ENCODE measurements at regions of chr10 and their contacts with region 1.

Region 1: DNA sequence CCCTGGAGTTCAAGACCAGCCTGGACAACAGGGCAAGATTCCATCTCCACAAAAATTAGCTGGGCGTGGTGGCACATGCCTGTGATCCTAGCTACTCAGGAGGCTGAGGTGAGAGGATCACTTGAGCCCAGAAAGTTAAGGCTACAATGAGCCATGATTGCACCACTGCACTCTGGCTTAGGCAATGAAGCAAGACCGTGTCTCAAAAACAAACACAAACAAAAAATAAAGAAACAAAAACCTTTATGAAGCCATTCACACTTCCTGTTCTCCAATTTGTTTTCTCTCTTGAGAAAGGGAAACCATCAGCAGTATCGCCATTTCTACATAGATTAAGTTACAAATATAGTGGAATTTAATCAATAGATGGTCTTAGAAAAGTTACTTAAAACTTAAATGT is 19.8 kb downstream of the YME1L1 start:
- DNase-seq: no peak
- ATAC-seq: no peak
- H3K4me3 ChIP-seq: no peak overlapping the region
- H3K27ac ChIP-seq: no peak overlapping the region
- H3K4me1 ChIP-seq: peaks cover 0 to 6% (median 0%) of the 10 kb centered on the region in 9 donors
- H3K27me3 ChIP-seq: no peaks in the 10 kb centered on the region
- CTCF ChIP-seq: no peak

Region 2: GRCh38 chr10:26997610-26998009 is 136.8 kb before region 1 on chr10:
- intact Hi-C with region 1: no loop called
- DNase-seq: no peak
- ATAC-seq: no peak
- H3K4me3 ChIP-seq: no peak overlapping the region
- H3K27ac ChIP-seq: no peak overlapping the region
- H3K4me1 ChIP-seq: no peaks in the 10 kb centered on the region
- H3K27me3 ChIP-seq: no peaks in the 10 kb centered on the region
- CTCF ChIP-seq: no peak

Region 3: DNA sequence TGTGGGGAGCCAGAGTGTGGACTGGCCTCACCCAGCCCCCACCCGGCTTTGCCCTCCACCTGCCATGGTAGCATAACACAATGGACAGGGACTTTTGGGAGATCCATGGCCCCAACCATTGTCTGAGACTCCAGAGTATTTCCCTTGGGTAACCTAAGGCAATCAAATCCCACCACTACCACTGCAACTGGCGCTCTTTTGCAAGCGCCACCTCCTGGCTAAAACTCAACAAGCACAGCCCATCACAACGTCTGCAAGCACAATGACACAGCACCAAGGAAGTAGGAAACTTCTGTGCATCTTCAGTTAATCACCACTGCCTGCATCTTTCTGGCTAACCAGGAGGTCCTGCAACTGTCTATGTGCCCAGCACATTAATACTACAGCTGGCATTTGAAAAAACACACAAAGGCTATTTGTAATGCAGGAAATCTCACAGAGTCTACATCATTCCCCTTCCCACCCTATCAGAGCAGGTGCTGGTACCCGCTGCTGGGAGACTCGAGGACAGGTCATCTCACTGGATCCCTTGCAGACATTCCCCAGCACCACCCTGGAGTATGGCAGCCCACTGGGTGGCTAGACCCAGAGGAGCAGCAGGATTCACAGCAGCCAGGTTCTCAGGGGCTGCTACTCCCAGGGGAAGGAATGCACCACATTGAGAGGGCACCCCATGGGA is 61.8 kb before region 1 on chr10:
- intact Hi-C with region 1: no loop called
- DNase-seq: no peak
- ATAC-seq: peak in 1 of 8 donors; percentile 47
- H3K4me3 ChIP-seq: no peak overlapping the region
- H3K27ac ChIP-seq: no peak overlapping the region
- H3K4me1 ChIP-seq: no peaks in the 10 kb centered on the region
- H3K27me3 ChIP-seq: no peaks in the 10 kb centered on the region
- CTCF ChIP-seq: no peak

Region 4: GRCh38 chr10:27207350-27207749 is 73.0 kb after region 1 on chr10:
- intact Hi-C with region 1: loop called in 1 of 10 experiments (anchors 10 kb)
- DNase-seq: no peak
- ATAC-seq: no peak
- H3K4me3 ChIP-seq: no peak overlapping the region
- H3K27ac ChIP-seq: no peak overlapping the region
- H3K4me1 ChIP-seq: no peaks in the 10 kb centered on the region
- H3K27me3 ChIP-seq: no peaks in the 10 kb centered on the region
- CTCF ChIP-seq: no peak